ENCODE measurements at regions of chr4 and their contacts with region 1.

Region 1: DNA sequence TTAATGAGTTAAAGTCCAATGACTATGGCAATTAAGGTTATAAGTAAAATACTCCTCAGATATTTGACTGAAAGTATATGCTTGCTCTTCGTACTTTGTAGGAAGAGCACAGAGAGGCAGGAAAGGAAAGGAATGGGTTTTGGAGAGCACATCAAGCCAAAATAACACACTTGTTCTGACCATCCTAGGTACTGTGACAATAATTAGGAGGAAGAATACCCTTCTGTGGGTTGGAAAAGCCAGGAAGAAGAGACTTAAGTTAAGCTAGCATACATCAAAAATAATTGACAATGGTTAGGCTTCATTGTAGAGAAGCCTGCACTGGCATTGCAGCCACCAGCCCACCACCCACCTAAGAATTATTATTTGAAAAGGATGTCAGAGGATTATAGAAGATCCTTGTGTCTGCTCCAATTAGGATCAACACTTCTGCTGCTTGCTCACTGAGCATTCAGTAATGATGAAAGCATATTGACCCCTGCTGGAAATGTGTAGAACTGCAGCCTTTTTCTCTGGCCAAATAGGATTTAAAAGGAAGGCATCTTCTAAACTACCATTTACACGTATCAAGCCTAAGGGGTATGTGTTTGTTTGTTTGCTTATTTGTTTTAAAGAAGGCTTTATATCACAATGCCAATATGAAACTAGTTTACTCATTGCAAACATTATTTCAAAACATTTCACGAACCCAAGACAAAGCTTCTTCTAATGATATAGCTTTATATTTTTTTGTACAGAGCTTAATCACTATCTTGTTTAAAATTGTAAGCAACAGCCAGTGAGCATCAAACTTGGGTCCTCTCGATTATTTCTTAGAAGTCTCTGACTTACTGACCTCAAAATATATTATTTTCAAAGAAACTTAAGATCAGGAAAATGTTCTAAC is 286.2 kb upstream of the TET2 start:
- DNase-seq: no peak

Region 2: DNA sequence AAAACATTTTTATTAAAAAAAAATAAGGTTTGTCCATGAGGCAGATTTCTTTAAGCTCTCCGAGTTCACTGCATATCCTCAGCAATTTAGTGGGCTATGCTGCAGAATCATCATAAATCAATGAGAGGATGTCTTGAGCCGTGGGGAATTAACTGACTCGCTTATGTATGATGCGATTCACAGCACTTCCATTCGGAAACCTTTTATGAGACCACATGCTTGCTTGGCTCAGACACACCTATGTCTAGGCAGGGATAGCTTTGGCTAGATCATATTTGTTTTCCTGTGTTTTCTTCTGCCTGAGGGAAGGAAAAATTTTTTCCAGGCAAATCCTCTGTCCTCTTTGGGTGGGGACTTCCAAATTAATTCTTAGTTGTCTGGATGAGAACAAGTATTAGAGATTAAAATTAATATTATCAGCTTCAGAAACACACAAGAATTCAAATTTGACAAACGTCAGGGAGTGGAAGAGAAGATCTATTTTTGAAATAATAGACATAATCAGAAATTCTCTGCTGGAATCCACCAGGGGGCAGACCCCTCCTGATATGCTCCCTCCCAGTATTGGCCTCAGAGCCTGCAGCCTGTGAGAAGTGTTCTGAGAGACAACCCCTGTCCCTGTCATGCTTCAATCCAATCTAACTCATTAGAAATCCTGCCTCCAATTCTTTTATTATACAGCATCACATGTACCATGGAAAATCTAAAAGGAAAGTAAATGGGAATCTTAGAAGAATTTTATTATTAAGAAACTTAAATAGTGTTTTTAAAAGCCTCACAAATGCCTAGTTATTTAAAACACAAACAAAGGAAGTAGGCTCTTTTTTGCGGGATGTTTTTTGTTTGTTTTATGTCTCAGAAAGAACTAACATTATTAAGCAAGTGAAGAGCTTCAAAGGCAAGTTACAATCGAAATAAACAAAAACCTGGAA is 795.6 kb before region 1 on chr4:
- intact Hi-C with region 1: loop called (anchors 5 kb)
- DNase-seq: no peak

Region 3: GRCh38 chr4:104531390-104531789 is 329.1 kb before region 1 on chr4:
- intact Hi-C with region 1: loop called (anchors 10 kb)
- DNase-seq: no peak

Region 4: DNA sequence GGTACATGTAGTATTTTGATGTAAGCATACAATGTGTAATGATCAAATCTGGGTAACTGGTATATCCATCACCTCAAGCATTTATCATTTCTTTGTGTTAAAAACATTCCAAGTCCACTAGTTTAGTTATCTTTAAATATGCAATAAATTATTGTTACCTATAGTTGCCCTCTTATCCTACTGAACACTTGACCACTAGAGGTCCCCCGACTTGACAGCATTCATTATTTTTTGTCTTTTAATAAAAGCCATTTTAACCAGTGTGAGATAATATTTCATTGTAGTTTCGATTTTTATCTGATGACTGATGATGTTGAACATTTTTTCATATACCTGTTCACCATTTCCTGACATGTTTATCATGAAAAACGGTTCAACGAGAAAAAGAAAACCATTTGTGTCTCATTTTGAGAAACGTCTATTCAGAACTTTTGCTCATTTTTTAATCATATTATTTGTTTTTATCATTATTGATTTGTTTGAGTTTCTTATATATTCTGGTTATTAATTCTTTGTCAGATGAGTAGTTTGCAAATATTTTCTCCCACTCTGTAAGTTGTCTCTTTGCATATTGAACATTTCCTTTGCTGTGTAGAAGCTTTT is 166.8 kb before region 1 on chr4:
- intact Hi-C with region 1: loop called (anchors 2 kb)
- DNase-seq: no peak

Measured in cardiac septum (tissue), 1 donor.